Aorta (tissue), 5 donors: ENCODE measurements at regions of chr20 and their contacts with region 1.

Region 1: DNA sequence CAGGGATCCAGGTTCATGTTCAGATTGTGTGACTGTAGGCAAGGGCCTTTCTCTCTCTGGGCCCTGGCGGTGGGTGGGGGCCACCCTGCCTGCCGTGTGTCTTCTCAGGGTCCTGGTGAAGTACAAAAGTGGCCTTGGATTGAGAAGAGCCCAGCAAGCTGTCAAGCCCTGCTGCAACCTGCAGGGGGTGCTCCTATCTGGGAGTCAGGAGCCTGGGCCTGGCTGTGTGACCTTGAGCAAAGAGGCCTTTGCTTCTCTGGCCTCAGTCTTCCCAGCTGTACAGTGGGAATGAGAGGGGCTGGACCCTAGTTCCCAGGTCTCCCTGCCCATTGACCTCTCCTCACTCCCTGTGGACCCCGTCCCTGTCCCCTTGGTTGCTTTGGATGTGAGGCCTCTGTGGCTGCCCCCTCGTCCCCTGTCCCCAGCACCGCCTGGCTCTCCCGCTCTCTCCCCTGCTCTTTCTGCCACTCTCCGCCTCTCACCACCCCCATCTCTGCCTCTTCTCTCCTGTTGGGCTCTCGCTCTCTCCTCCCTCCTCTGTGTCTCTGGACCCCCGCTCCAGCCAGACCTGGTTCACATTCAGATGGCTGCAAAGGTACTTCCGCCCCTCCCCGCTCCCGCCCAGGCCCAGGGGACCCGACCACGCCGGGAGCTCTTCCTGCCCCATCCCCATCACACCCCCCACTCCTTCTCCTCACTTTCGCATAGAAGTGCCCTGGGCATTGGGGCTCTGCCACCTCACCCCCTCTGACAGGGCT is 46.7 kb downstream of the SRC start:
- DNase-seq: peak; percentile 33 to 60
- ATAC-seq: no peak
- H3K4me3 ChIP-seq: no peak overlapping the region
- H3K27ac ChIP-seq: no peak overlapping the region
- H3K4me1 ChIP-seq: no peaks in the 10 kb centered on the region
- H3K27me3 ChIP-seq: no peaks in the 10 kb centered on the region

Region 2: DNA sequence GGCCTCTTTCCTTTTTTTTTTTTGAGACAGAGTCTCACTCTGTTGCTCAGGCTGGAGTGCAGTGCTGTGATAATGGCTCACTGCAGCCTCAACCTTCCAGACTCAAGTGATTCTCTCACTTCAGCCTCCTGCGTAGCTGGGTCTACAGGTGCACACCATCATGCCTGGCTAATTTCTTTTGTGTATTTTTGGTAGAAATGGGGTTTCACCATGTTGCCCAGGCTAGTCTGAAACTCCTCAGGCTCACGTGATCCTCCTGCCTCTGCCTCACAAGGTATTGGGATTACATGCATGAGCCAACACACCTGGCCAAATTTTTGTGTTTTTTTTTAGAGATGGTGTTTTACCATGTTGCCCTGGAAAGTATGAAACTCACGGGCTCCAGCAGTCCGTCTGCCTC is 17.4 kb before region 1 on chr20:
- intact Hi-C with region 1: no loop called
- DNase-seq: no peak
- ATAC-seq: no peak
- H3K4me3 ChIP-seq: no peak overlapping the region
- H3K27ac ChIP-seq: no peak overlapping the region
- H3K4me1 ChIP-seq: no peaks in the 10 kb centered on the region
- H3K27me3 ChIP-seq: no peaks in the 10 kb centered on the region

Region 3: DNA sequence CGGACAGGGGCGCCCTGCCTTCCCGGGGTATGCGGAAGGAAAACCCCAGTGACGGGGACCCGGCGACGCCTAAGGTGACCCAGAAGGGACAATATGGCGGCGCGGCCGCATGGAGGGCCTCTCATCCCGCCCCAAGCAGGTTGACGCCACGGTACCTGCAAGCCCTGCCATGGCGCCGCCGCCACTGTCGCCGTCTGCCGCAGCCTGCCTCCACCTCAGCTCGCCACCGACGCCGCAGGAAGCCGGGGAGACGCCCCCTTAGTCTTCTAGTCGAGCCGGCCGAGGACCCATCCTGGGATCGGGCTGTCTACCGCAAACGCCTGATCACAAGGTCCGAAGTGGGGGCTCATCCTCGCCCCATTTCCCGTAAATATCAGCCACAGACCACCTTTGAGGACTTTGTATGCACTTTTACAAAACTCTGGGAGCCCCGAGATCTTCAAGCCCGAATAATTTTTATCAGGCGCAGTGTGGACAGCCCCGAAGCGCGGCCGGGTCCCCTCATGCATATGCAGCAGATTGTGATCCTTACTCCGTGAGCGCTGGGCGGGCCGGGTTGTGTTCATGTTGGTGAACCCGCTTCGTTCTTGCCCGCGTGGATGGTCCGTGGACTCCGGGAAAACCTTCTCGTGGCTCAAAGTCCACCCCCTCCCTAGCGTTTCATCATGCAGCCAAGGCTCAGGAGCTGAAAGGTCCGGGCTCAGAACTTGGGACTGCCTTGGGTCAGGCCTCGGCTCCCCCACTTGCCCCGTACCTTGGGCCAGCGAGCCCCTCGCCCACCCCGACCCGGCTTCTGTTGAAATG is 135.2 kb after region 1 on chr20 and contains the start of gene BLCAP:
- intact Hi-C with region 1: loop called (anchors 5 kb)
- DNase-seq: peak; percentile 93 to 97
- ATAC-seq: peak; percentile 95
- H3K4me3 ChIP-seq: peak within 1 kb of the TSS; percentile 88 to 93
- H3K27ac ChIP-seq: peak within 1 kb of the TSS in 1 of 2 donors; percentile 74
- H3K4me1 ChIP-seq: peaks cover 0 to 3% of the 10 kb centered on the region in 2 donors
- H3K27me3 ChIP-seq: no peaks in the 10 kb centered on the region
- total RNA-seq, gene BLCAP: 46.9 to 68.7 TPM